Activated CD8-positive, alpha-beta T cell treated with anti-CD3 and anti-CD28 coated beads for 36 hours (primary cell): ENCODE measurements at regions of chr12 and their contacts with region 1.

Region 1: DNA sequence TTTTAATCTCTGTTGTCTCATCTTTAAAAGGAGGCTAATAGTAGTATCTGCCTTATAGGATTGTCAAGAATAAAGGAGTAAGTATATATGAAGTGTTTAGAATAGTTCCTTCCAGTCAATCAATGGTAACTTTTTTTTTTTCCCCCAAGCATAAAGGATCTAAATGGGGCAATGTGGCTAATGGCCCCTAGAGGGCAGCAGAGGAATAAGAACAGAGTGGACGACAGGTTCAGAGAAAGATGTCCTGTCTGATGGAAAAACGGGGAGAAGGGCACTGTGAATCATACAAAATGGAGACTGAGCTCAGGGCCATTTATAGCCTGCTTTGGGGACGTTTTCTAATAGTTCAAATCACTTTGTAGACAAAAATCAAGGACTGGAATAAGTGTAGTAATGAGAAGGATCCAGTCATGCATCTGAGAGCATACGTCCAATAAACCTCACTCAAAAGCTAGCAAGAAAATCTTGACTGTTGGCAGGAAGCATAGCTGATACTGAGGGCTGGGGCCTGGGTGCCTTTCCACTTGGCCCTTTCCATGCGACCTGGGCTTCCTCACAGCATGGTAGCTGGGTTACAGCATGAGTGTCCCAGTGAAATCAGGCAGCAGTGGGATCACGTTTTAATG is 51.3 kb downstream of the IFNG-AS1 start:
- DNase-seq: peak; percentile 86
- ATAC-seq: peak; percentile 57
- H3K4me3 Mint-ChIP-seq: no peak overlapping the region
- H3K27ac Mint-ChIP-seq: peak overlapping the region; percentile 86
- H3K4me1 Mint-ChIP-seq: peaks cover 56% of the 10 kb centered on the region
- H3K27me3 Mint-ChIP-seq: no peaks in the 10 kb centered on the region
- CTCF ChIP-seq: peak; percentile 93

Region 2: GRCh38 chr12:67671382-67671781 is 369.2 kb before region 1 on chr12:
- CTCF ChIA-PET with region 1: no interaction called
- POLR2A ChIA-PET with region 1: no interaction called
- intact Hi-C with region 1: no loop called
- DNase-seq: no peak
- ATAC-seq: no peak
- H3K4me3 Mint-ChIP-seq: no peak overlapping the region
- H3K27ac Mint-ChIP-seq: no peak overlapping the region
- H3K4me1 Mint-ChIP-seq: peaks cover 31% of the 10 kb centered on the region
- H3K27me3 Mint-ChIP-seq: no peaks in the 10 kb centered on the region
- CTCF ChIP-seq: no peak

Region 3: DNA sequence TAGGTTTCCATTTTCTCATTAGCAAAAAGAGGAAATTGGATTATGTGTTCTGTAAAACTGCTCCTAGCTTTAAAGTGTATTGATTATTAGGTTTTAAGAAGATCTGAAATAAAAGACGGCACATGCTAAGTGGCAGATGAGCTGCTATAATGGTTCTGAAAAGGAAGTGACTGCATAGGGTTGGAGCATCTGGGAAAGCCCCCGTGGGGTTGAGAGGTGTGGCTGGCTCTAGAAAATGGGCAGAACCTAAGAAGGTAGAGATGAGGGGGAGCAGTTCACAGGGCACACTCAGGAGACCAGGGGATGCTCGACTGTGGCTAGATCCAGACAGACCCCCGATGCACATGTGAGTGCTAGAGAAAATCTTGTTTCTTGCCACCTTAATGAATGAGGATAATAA is 49.4 kb before region 1 on chr12:
- CTCF ChIA-PET with region 1: interaction called, 18 read pairs
- POLR2A ChIA-PET with region 1: interaction called, 3 read pairs
- intact Hi-C with region 1: no loop called
- DNase-seq: peak; percentile 66
- ATAC-seq: peak; percentile 88
- H3K4me3 Mint-ChIP-seq: peak overlapping the region; percentile 47
- H3K27ac Mint-ChIP-seq: peak overlapping the region; percentile 78
- H3K4me1 Mint-ChIP-seq: peaks cover 42% of the 10 kb centered on the region
- H3K27me3 Mint-ChIP-seq: no peaks in the 10 kb centered on the region
- CTCF ChIP-seq: no peak

Region 4: DNA sequence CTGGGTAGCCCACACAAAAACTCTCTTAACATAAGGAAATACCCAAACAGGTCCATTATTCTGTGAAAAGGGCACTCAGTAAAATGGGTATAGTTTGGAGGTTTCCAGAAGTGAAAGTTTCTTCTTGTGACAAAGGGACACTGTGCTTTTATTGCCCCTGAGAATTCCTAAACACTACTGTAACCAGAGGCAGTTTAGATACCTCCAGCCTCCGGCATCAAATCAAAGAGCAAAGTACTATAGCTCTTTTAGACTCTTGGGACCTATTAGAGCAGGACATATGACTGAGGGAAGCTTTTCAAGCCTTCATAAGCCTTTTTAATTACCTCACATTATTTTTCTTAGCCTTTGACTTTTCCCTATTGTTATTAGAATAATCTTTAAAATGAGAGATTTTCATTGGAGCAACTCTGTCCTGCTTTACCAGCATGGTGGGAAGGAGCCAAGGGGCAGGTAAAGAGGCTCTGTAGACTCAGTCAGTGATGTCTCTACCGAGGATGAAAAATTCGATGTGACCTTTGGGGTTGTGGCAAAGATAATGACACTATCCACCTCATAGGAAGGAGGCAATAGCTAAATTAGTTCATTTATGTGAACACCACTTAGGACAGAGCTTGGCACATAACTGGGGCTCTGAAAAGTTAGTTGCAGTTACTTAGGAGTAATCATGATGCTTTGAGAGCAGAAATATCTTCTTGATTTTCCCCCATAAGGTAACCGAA is 33.9 kb after region 1 on chr12:
- CTCF ChIA-PET with region 1: interaction called, 12 read pairs
- POLR2A ChIA-PET with region 1: no interaction called
- intact Hi-C with region 1: no loop called
- DNase-seq: no peak
- ATAC-seq: peak; percentile 55
- H3K4me3 Mint-ChIP-seq: no peak overlapping the region
- H3K27ac Mint-ChIP-seq: no peak overlapping the region
- H3K4me1 Mint-ChIP-seq: peaks cover 26% of the 10 kb centered on the region
- H3K27me3 Mint-ChIP-seq: no peaks in the 10 kb centered on the region
- CTCF ChIP-seq: no peak

Region 5: DNA sequence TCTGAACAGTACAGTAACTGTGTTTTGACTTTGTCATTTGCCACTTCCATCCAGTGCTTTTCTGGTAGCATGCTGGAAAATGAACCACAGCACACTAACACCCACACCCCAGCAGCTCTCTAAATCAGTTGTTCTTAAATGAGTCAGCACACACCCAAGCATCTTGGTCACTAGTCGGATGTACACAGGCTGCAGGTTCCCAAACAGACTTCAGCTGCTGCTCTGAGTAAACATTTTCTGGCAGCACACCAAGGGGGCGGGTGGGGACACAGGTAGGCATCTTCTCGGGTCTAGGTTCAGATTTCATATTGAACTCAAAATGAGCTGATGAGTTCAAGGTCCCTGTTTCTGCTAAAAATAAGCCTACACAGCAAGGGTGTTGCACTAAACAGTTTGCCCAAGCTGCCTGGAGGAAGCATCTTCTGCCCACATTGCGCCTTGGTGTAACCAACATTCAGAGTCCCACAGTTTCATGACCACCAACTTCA is 79.2 kb after region 1 on chr12:
- CTCF ChIA-PET with region 1: interaction called, 20 read pairs
- POLR2A ChIA-PET with region 1: interaction called, 5 read pairs
- intact Hi-C with region 1: loop called (anchors 5 kb)
- DNase-seq: peak; percentile 86
- ATAC-seq: peak; percentile 72
- H3K4me3 Mint-ChIP-seq: peak overlapping the region; percentile 11
- H3K27ac Mint-ChIP-seq: no peak overlapping the region
- H3K4me1 Mint-ChIP-seq: peaks cover 26% of the 10 kb centered on the region
- H3K27me3 Mint-ChIP-seq: peaks cover 2% of the 10 kb centered on the region
- CTCF ChIP-seq: no peak

Region 6: GRCh38 chr12:68175557-68176061 is 135.0 kb after region 1 on chr12:
- CTCF ChIA-PET with region 1: interaction called, 14 read pairs
- POLR2A ChIA-PET with region 1: no interaction called
- intact Hi-C with region 1: no loop called
- DNase-seq: peak; percentile 83
- ATAC-seq: peak; percentile 83
- H3K4me3 Mint-ChIP-seq: peak overlapping the region; percentile 50
- H3K27ac Mint-ChIP-seq: peak overlapping the region; percentile 73
- H3K4me1 Mint-ChIP-seq: peaks cover 71% of the 10 kb centered on the region
- H3K27me3 Mint-ChIP-seq: no peaks in the 10 kb centered on the region
- CTCF ChIP-seq: no peak

Region 7: GRCh38 chr12:68223083-68223747 is 182.7 kb after region 1 on chr12:
- CTCF ChIA-PET with region 1: interaction called, 78 read pairs
- POLR2A ChIA-PET with region 1: no interaction called
- intact Hi-C with region 1: no loop called
- DNase-seq: peak; percentile 86
- ATAC-seq: peak; percentile 92
- H3K4me3 Mint-ChIP-seq: peak overlapping the region; percentile 20
- H3K27ac Mint-ChIP-seq: peak overlapping the region; percentile 53
- H3K4me1 Mint-ChIP-seq: peaks cover 11% of the 10 kb centered on the region
- H3K27me3 Mint-ChIP-seq: peaks cover 2% of the 10 kb centered on the region
- CTCF ChIP-seq: peak; percentile 96

Region 8: DNA sequence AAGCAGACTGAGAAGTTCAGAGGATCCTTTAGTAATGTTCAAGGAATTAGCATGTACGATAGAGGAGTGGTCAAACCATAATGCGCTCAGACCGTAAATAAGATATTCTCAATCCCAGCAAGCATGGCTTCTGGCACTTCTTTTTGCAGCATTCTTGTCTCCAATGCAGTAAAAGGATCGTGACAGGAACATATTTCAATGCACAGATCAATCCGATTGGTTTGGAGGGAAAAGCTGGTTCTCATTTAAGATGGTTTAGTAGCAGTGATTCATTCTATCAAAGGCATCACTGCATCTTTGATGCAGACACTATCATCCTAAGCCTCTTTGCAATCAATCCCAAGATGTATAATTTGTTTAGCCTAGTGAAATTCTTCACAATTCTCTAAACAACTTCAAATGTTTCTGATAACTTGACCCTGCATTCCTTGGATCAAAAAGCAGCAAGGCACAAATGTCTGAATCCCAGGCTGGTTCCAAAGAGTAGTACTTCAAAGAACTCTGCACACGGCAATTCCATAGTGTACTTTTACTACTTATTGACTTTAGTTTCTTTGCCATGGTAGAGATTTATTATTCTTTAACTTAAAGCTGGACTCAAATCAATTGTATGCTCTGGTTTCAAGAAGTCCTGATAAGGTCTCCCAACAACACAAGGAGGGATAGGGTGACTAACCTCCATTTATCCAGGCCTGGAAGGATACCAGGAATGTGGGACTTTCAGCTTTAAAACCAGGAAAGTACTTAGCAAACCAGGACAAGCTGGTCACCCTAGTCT is 388.4 kb after region 1 on chr12:
- CTCF ChIA-PET with region 1: no interaction called
- POLR2A ChIA-PET with region 1: no interaction called
- intact Hi-C with region 1: no loop called
- DNase-seq: no peak
- ATAC-seq: no peak
- H3K4me3 Mint-ChIP-seq: no peak overlapping the region
- H3K27ac Mint-ChIP-seq: no peak overlapping the region
- H3K4me1 Mint-ChIP-seq: no peaks in the 10 kb centered on the region
- H3K27me3 Mint-ChIP-seq: no peaks in the 10 kb centered on the region
- CTCF ChIP-seq: no peak